MCF 10A (cell line): ENCODE measurements at regions of chr19 and their contacts with region 1.

Region 1: GRCh38 chr19:48110350-48110966 is at the start of gene PLA2G4C:
- DNase-seq: peak; percentile 87
- H3K4me3 Mint-ChIP-seq: peak within 1 kb of the TSS; percentile 69
- H3K27ac Mint-ChIP-seq: peak within 1 kb of the TSS; percentile 71
- H3K4me1 Mint-ChIP-seq: no peaks in the 10 kb centered on the region
- H3K27me3 Mint-ChIP-seq: peaks cover 14% of the 10 kb centered on the region
- CTCF ChIP-seq: no peak
- total RNA-seq, gene PLA2G4C: 1.1 and 1.4 TPM in 2 replicates

Region 2: DNA sequence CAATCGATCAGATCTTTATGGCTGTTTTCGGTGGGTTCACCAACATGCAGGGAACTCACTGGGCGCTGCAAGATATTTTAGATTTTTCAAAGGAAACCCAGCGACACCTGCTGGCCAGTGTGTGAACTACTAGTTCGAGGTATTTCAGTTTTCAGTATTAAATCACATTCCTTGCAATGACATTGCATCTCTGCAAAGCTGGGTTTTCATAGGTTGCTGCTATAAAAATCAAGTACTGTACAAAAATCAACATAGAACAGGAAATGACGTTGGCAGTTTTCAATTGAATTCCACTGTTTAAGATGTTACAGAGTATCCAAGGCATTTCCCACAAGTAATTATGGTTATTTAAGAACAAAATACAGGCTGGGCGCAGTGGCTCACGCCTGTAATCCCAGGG is 42.1 kb after region 1 on chr19:
- CTCF ChIA-PET with region 1: interaction called, 66 read pairs
- POLR2A ChIA-PET with region 1: interaction called, 3 read pairs
- intact Hi-C with region 1: loop called (anchors 1 kb)
- DNase-seq: peak; percentile 62
- H3K4me3 Mint-ChIP-seq: no peak overlapping the region
- H3K27ac Mint-ChIP-seq: no peak overlapping the region
- H3K4me1 Mint-ChIP-seq: no peaks in the 10 kb centered on the region
- H3K27me3 Mint-ChIP-seq: no peaks in the 10 kb centered on the region
- CTCF ChIP-seq: peak; percentile 65